Posterior cingulate gyrus (tissue), 11 donors: ENCODE measurements at regions of chr5 and their contacts with region 1.

Region 1: GRCh38 chr5:132883261-132883834 is 9.9 kb downstream of the LEAP2 start:
- DNase-seq: peak in 8 of 10 donors; percentile 18 to 91 (median 59)

Region 2: DNA sequence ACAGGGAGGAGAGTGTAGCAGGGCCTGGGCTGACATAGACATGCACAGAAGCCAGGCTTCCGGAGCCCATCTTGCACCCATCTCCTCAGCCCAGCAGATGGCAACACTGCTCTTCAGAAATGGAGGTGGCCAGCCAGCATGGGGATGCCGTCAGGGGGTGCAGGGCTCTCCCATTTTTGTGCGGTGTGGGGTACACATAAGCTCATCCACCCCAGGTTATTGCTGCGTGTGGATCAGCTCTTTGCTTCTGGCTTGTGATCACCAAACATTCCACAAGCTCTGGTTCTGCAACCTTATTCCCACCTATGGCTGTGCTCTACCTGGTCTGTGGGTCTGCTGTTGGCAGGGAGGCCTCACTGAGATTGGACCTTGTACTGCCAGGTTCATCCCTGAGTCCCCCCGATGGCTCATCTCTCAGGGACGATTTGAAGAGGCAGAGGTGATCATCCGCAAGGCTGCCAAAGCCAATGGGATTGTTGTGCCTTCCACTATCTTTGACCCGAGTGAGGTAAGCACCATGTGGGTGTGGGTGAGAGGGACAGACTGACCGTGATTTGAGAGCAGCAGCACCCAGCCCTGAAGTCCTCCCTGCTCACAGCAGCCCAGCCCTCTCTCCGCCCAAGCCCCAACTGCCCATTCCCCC is 496.6 kb before region 1 on chr5:
- intact Hi-C with region 1: loop called (anchors 5 kb)
- DNase-seq: peak in 9 of 10 donors; percentile 47 to 96 (median 70)

Region 3: DNA sequence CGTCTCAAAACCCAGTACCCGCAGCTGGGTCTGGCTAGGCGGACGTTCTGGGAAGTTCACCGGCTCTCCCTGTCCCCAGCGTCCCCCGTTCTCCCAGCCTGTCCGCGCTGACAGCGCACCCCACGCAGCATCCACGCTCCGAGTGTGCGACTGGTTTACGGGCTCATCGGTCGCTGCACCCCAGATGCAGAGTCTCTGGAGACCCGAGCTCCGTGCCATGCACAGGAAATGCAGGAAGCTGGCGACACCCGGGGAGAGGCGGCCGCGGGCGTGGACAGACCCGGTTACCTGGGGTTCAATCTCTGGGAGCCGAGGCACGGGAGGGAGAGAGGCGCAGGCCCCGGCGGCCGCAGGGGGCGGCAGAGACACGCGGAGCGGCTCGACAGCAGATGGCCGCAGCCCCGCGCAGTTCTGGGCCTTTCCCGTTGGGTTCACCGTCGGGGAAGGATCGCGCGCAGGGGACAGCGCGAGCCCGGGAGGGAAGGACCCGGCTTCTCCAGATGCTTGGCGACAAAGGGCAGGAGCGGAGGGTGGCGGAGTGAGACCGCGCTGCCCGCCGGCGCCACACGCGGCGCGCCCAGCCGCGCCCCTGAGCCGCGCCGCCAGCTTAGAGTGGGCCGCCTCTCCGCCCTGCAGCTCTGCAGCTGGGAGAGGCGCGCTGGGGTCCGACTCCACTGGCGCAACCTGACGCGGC is 53.5 kb before region 1 on chr5:
- intact Hi-C with region 1: loop called (anchors 5 kb)
- DNase-seq: peak; percentile 62 to 97 (median 72)